ENCODE measurements at regions of chr15 and their contacts with region 1.

Region 1: DNA sequence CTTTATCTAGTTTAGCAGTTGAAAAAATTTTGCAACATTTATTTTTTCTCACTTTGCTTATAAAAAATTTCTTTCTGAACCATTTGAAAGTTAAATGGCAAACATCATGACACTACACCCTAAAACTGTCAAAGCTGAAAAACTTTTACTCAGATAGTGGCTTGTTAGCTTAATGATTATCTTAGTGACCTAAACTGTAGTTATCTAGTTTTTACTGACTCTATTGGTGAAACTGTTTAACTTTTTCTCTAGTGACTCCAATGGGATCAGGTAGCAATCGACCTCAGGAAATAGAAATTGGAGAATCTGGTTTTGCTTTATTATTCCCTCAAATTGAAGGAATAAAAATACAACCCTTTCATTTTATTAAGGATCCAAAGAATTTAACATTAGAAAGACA is 13.3 kb downstream of the FBXO22 start:
- DNase-seq: no peak
- H3K4me3 ChIP-seq: no peak overlapping the region
- H3K27ac ChIP-seq: no peak overlapping the region
- H3K4me1 ChIP-seq: no peaks in the 10 kb centered on the region
- H3K27me3 ChIP-seq: no peaks in the 10 kb centered on the region
- CTCF ChIP-seq: no peak

Region 2: GRCh38 chr15:75809986-75810750 is 106.8 kb before region 1 on chr15:
- intact Hi-C with region 1: loop called (anchors 5 kb)
- DNase-seq: peak; percentile 25
- H3K4me3 ChIP-seq: no peak overlapping the region
- H3K27ac ChIP-seq: no peak overlapping the region
- H3K4me1 ChIP-seq: no peaks in the 10 kb centered on the region
- H3K27me3 ChIP-seq: no peaks in the 10 kb centered on the region
- CTCF ChIP-seq: peak; percentile 38

Region 3: GRCh38 chr15:75861750-75862402 is 55.1 kb before region 1 on chr15:
- intact Hi-C with region 1: no loop called
- DNase-seq: no peak
- H3K4me3 ChIP-seq: no peak overlapping the region
- H3K27ac ChIP-seq: no peak overlapping the region
- H3K4me1 ChIP-seq: no peaks in the 10 kb centered on the region
- H3K27me3 ChIP-seq: no peaks in the 10 kb centered on the region
- CTCF ChIP-seq: no peak